Heart left ventricle (tissue), 16 donors: ENCODE measurements at regions of chr20 and their contacts with region 1.

Region 1: GRCh38 chr20:57080788-57081187 is 185.7 kb downstream of the BMP7 start:
- DNase-seq: no peak
- ATAC-seq: no peak
- H3K4me3 ChIP-seq: no peak overlapping the region
- H3K27ac ChIP-seq: no peak overlapping the region
- H3K4me1 ChIP-seq: no peaks in the 10 kb centered on the region
- H3K27me3 ChIP-seq: peaks cover 0 to 15% (median 0%) of the 10 kb centered on the region in 9 donors
- CTCF ChIP-seq: no peak
- POLR2A ChIP-seq: no peak

Region 2: GRCh38 chr20:57329608-57330221 is 248.9 kb after region 1 on chr20 and contains the start of gene SPO11:
- intact Hi-C with region 1: loop called in 1 of 10 experiments (anchors 5 kb)
- DNase-seq: no peak
- ATAC-seq: peak in 2 of 4 donors; percentile 45 to 54
- H3K4me3 ChIP-seq: no peak within 1 kb of the TSS
- H3K27ac ChIP-seq: no peak within 1 kb of the TSS
- H3K4me1 ChIP-seq: no peaks in the 10 kb centered on the region
- H3K27me3 ChIP-seq: peaks cover 0 to 65% (median 10%) of the 10 kb centered on the region in 9 donors
- CTCF ChIP-seq: peak in 8 of 12 donors; percentile 10 to 31 (median 18)
- POLR2A ChIP-seq: no peak
- total RNA-seq, gene SPO11: not detected